ENCODE measurements at regions of chr10 and their contacts with region 1.

Region 1: GRCh38 chr10:78047314-78047891 is 13.7 kb downstream of the RPS24 start:
- DNase-seq: peak; percentile 89 to 94
- H3K4me3 ChIP-seq: no peak overlapping the region
- H3K27ac ChIP-seq: no peak overlapping the region
- H3K4me1 ChIP-seq: peaks cover 0 to 32% (median 16%) of the 10 kb centered on the region in 4 donors
- H3K27me3 ChIP-seq: no peaks in the 10 kb centered on the region
- CTCF ChIP-seq: peak in 5 of 7 experiments; percentile 36 to 93 (median 83)
- EP300 ChIP-seq: no peak
- POLR2A ChIP-seq: no peak

Region 2: DNA sequence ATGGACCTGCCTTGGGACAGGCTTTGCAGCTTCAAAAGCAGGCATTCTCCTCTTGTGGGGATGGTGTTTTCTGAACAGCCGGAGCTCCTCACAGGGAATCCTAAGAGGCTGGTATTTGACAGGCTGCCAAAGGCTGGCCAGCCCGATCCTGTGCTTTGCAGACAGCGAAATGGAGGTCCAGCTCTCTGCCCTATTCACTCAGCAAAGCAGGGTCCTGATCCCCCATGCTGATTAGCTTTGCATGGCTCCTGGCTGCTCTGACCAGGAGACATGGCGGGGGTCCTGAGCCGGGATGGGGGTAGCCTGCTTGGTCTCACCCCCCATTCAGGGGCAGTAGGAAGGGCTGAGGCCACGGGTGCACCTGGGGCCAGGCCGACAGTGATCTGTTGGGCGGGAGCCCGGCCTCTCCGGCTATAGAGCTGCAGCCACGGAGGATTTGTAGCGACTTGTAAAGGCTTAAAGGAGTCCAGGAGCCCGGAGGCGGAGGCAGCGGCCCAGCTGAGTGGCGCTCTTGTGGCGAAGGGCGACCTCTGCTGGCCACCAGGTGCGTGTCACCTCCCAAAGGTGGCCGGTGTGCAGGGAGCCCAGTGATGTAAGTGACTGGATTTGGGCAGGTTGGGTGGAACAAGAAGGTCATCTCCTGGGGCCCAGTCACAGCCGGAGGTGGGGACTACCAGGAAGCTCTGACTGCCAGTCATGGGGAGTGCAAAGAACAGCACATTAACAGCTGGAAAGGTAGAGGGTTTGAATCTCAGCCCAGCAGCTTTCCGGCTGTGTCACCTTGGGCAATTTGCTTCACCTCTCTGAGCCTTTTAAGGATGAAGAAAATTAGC is 1147.9 kb after region 1 on chr10:
- intact Hi-C with region 1: loop called (anchors 5 kb)
- DNase-seq: peak; percentile 92 to 95
- H3K4me3 ChIP-seq: peak overlapping the region in 1 of 4 donors; percentile 13
- H3K27ac ChIP-seq: peak overlapping the region; percentile 8 to 76 (median 69)
- H3K4me1 ChIP-seq: peaks cover 17 to 62% (median 39%) of the 10 kb centered on the region in 4 donors
- H3K27me3 ChIP-seq: no peaks in the 10 kb centered on the region
- CTCF ChIP-seq: peak in 6 of 7 experiments; percentile 77 to 95 (median 92)
- EP300 ChIP-seq: no peak
- POLR2A ChIP-seq: no peak

Measured in stomach (tissue), 19 donors.